ENCODE measurements at regions of chr9 and their contacts with region 1.

Region 1: GRCh38 chr9:22037954-22038690 is 29.0 kb upstream of the CDKN2B start:
- DNase-seq: no peak
- ATAC-seq: no peak
- H3K4me3 ChIP-seq: no peak overlapping the region
- H3K27ac ChIP-seq: no peak overlapping the region
- H3K4me1 ChIP-seq: peaks cover 0 to 20% (median 0%) of the 10 kb centered on the region in 9 donors
- H3K27me3 ChIP-seq: no peaks in the 10 kb centered on the region
- CTCF ChIP-seq: peak; percentile 13 to 68 (median 55)

Region 2: DNA sequence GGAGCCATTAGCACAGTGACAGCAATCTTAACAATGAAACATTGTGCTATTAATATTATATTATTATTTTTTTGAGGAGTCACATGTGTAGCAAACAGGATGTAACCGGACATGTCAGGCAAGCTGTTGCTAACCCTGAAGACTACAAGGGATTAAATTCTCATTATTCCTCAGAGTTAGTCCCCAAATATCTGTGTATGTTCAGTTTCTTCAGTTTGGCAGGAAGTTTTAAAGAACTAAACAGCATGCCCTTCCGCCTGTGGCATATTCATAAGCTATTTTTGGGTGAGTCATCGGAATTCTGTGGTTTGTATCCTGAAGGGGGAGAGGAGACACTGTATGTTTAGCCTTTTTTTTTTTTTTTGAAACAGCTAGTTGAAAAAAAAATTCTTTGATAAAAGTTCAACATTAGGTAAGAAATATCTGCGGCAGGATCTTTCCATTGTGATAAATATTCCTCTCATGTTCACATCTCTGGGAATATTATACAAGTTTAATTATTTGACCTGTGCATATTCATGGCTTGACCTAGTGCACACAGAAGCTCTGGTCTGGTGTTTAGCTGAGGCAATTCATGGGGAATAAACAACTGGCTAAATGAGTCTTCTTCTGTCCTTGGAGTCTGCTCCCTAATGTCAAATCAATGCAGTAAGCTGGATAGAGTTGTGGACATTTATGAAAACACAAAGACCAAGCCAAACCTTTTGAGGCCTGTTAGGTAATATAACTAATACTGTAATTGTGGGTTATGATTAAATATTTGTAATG is 173.7 kb after region 1 on chr9:
- intact Hi-C with region 1: loop called in 1 of 10 experiments (anchors 10 kb)
- DNase-seq: no peak
- ATAC-seq: peak in 4 of 8 donors; percentile 46 to 58 (median 54)
- H3K4me3 ChIP-seq: no peak overlapping the region
- H3K27ac ChIP-seq: peak overlapping the region in 3 of 10 donors; percentile 25 to 51 (median 39)
- H3K4me1 ChIP-seq: peaks cover 0 to 27% (median 4%) of the 10 kb centered on the region in 9 donors
- H3K27me3 ChIP-seq: peaks cover 0 to 4% (median 0%) of the 10 kb centered on the region in 7 donors
- CTCF ChIP-seq: no peak

Region 3: GRCh38 chr9:22238809-22239684 is 200.9 kb after region 1 on chr9:
- intact Hi-C with region 1: loop called in 3 of 10 experiments (anchors 10 kb)
- DNase-seq: no peak
- ATAC-seq: peak in 1 of 8 donors; percentile 46
- H3K4me3 ChIP-seq: no peak overlapping the region
- H3K27ac ChIP-seq: no peak overlapping the region
- H3K4me1 ChIP-seq: peaks cover 0 to 27% (median 0%) of the 10 kb centered on the region in 9 donors
- H3K27me3 ChIP-seq: no peaks in the 10 kb centered on the region
- CTCF ChIP-seq: peak in 8 of 9 donors; percentile 16 to 66 (median 56)

Measured in heart right ventricle (tissue), 16 donors.